PC-3 (cell line): ENCODE measurements at regions of chr19 and their contacts with region 1.

Region 1: DNA sequence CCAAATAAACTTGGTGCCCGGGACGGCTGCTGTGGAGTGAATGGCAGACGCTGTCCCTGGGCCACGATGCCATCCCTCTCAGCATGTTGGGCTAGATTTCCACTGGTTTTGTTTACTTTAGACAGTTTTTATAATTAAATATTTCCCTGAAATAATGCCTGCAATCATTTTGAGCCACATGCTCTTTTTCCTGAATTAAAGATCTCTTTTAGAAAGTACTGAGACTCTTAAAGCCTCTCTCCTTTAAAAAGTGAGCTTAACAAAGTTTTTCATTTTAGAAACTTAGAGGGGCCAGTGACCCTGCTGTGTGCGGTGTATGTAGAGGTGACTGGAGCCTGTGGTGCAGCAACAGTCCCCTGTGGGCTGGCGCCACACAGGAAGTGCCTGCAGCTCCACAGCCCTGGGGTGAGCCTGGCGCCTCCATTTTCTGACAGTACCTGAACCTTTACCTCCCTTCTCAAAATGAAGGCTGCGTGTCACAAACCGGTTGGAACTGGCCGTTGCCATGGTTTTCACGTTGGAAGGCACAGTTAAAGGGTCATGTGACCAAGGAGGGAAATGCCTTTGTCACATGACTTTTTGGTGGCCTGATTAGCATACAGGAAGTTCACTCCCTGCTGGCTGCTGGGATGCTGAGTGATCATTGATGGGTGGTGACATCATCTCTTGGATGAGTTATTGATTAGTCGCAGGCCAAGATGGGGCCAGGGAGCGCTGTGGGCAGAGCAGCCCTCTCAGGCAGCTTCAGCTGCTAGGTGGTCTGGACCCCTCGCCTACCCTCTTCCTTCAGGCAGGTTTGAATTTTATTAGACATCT is 26.3 kb downstream of the TSSK6 start:
- DNase-seq: peak; percentile 72
- ATAC-seq: peak; percentile 45
- H3K4me3 ChIP-seq: no peak overlapping the region
- H3K27ac ChIP-seq: peak overlapping the region; percentile 76
- H3K4me1 ChIP-seq: peaks cover 22% of the 10 kb centered on the region
- H3K27me3 ChIP-seq: no peaks in the 10 kb centered on the region
- CTCF ChIP-seq: no peak

Region 2: GRCh38 chr19:19366612-19367396 is 122.3 kb before region 1 on chr19:
- CTCF ChIA-PET with region 1: interaction called, 4 read pairs
- POLR2A ChIA-PET with region 1: no interaction called
- intact Hi-C with region 1: loop called (anchors 1 kb)
- DNase-seq: peak; percentile 91
- ATAC-seq: peak; percentile 73
- H3K4me3 ChIP-seq: no peak overlapping the region
- H3K27ac ChIP-seq: 0 out of 2 replicates have a peak overlapping the region, but pooled peaks have one; percentile 12
- H3K4me1 ChIP-seq: peaks cover 18% of the 10 kb centered on the region
- H3K27me3 ChIP-seq: no peaks in the 10 kb centered on the region
- CTCF ChIP-seq: peak; percentile 96

Region 3: GRCh38 chr19:19385108-19385899 is 103.8 kb before region 1 on chr19:
- CTCF ChIA-PET with region 1: no interaction called
- POLR2A ChIA-PET with region 1: interaction called, 18 read pairs
- intact Hi-C with region 1: no loop called
- DNase-seq: peak; percentile 99
- ATAC-seq: peak; percentile 96
- H3K4me3 ChIP-seq: peak overlapping the region; percentile 100
- H3K27ac ChIP-seq: peak overlapping the region; percentile 14; the same call in 1 of the 2 replicates
- H3K4me1 ChIP-seq: peaks cover 29% of the 10 kb centered on the region
- H3K27me3 ChIP-seq: no peaks in the 10 kb centered on the region
- CTCF ChIP-seq: no peak

Region 4: DNA sequence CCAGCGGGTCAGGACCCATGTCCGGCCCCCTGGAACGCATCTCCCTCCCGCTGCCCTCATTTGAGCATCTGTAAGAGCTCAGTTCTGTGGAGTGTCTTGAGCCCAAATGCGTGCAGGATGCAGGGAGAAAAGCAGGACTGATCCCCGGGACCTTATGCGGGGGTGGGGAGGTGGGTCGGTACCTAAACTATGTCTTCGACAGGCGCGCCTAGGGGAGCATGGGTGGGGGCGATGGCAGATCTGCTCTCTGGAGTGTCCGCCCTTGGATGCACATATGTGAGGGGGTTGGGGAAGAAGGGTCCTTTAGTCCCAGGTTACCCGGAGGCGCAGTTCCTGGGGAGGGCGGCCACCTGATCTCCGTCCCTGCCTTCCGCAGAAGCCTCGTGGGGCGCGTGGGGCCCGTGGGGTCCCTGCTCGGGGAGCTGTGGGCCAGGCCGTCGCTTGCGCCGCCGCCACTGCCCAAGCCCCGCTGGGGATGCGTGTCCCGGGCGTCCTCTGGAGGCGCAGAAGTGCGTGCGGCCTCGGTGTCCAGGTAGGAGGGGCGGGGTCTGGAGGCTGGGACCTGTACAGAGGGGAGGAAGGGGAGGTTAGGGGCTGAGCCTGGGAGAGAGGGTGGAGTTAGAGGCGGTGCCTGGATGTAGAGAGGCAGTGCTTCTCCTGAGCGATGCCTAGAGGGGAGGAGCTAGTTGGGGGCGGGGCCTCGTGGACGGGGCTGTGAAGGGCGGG is 51.8 kb after region 1 on chr19:
- CTCF ChIA-PET with region 1: no interaction called
- POLR2A ChIA-PET with region 1: no interaction called
- intact Hi-C with region 1: no loop called
- DNase-seq: peak; percentile 93
- ATAC-seq: peak; percentile 94
- H3K4me3 ChIP-seq: peak overlapping the region; percentile 68
- H3K27ac ChIP-seq: no peak overlapping the region
- H3K4me1 ChIP-seq: peaks cover 9% of the 10 kb centered on the region; the same call in 1 of the 2 replicates
- H3K27me3 ChIP-seq: no peaks in the 10 kb centered on the region
- CTCF ChIP-seq: peak; percentile 34; the same call in 1 of the 2 replicates

Region 5: DNA sequence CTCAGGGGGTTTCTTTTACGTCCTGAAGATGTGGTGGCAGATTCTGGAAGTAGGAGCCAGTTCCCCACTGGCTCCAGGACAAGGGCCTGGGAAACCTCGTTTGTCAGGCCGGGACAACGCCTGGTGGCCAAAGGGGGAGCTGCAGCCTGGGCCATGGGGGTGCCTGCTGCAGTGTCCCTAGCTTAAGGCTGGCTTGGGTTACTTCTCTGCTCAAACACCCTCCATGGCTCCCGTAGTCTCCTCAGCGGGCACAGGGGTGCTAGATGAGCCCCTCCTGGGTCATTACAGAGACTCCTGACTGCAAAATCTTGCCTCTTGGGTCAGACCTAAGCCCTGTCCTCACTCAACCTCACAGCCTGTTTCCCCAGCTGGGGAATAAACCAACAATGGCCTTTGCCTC is 63.7 kb after region 1 on chr19:
- CTCF ChIA-PET with region 1: no interaction called
- POLR2A ChIA-PET with region 1: no interaction called
- intact Hi-C with region 1: no loop called
- DNase-seq: peak; percentile 45
- ATAC-seq: peak; percentile 77
- H3K4me3 ChIP-seq: no peak overlapping the region
- H3K27ac ChIP-seq: no peak overlapping the region
- H3K4me1 ChIP-seq: no peaks in the 10 kb centered on the region
- H3K27me3 ChIP-seq: no peaks in the 10 kb centered on the region
- CTCF ChIP-seq: peak; percentile 59